ENCODE measurements at regions of chr3 and their contacts with region 1.

Region 1: DNA sequence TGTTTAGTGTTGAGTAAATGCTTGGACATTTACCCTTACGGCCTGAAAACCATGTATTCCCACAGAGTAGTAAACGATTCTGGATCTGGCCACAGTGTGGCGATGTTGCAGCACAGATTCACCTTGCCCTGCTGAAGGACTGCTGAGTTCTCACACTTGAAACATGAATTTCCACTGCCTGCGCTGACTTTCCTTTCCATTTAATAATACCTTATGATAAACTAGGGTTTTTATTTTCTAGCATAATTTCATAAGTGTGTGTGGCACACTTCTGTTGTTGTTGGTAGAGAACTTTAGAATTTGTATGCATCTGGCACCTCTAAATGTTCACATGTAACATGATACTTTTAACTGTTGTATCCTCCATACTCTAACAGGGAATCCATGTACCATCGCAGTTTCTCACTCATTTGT is 53.9 kb downstream of the C3orf38 start:
- H3K4me3 Mint-ChIP-seq: no peak overlapping the region
- H3K27ac Mint-ChIP-seq: no peak overlapping the region
- H3K4me1 Mint-ChIP-seq: peaks cover 5% of the 10 kb centered on the region
- H3K27me3 Mint-ChIP-seq: peaks cover 2% of the 10 kb centered on the region

Region 2: GRCh38 chr3:88167704-88168103 is 35.9 kb before region 1 on chr3:
- intact Hi-C with region 1: no loop called
- H3K4me3 Mint-ChIP-seq: no peak overlapping the region
- H3K27ac Mint-ChIP-seq: no peak overlapping the region
- H3K4me1 Mint-ChIP-seq: no peaks in the 10 kb centered on the region
- H3K27me3 Mint-ChIP-seq: no peaks in the 10 kb centered on the region

Region 3: GRCh38 chr3:89098964-89099585 is 895.4 kb after region 1 on chr3:
- intact Hi-C with region 1: loop called (anchors 5 kb)
- H3K4me3 Mint-ChIP-seq: no peak overlapping the region
- H3K27ac Mint-ChIP-seq: no peak overlapping the region
- H3K4me1 Mint-ChIP-seq: no peaks in the 10 kb centered on the region
- H3K27me3 Mint-ChIP-seq: peaks cover 2% of the 10 kb centered on the region

Region 4: DNA sequence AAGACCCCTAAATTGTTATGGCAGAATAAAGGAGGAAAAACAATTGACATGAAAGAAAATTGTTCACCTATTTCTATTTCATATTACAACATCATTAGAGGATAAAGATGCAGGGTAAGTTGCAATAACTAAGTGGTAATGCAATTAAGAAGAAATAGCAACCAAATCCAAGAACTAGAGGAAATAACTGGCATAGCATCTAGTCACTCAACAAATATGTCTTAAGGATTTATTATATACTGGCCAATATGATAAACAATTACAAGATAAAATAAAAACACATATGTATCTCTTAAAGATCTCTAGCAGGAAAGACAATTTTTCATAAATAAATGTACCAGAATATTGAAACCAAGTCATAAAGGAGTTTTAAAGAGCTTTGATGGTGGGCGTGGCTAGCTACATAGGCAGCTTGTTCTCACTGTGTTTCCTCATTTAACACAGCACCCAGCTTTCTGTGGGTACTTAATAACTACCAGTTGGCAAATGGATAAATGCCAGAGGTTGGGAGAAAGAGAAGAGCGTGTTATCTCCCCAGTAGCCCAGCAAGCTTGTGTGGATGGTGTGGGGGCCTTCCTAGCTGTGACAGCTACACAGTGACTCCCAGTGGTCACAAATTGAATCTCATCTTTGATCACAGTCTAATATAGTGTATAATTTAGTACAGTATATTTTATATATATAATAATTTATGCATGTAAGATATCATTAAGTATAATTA is 1887.7 kb after region 1 on chr3:
- intact Hi-C with region 1: loop called (anchors 10 kb)
- H3K4me3 Mint-ChIP-seq: no peak overlapping the region
- H3K27ac Mint-ChIP-seq: no peak overlapping the region
- H3K4me1 Mint-ChIP-seq: no peaks in the 10 kb centered on the region
- H3K27me3 Mint-ChIP-seq: no peaks in the 10 kb centered on the region

Region 5: GRCh38 chr3:90132197-90132596 is 1928.5 kb after region 1 on chr3:
- intact Hi-C with region 1: no loop called
- H3K4me3 Mint-ChIP-seq: no peak overlapping the region
- H3K27ac Mint-ChIP-seq: no peak overlapping the region
- H3K4me1 Mint-ChIP-seq: no peaks in the 10 kb centered on the region
- H3K27me3 Mint-ChIP-seq: no peaks in the 10 kb centered on the region

Measured in dendritic cell treated with granulocyte-macrophage colony-stimulating factor and Interleukin-4, amounts not matched to agents 40 ng/mL and 50 ng/mL, for 4 days (primary cell).